ENCODE measurements at regions of chr3 and their contacts with region 1.

Region 1: GRCh38 chr3:178325330-178325729 is 210.9 kb upstream of the KCNMB2 start:
- DNase-seq: no peak
- ATAC-seq: peak in 1 of 8 donors; percentile 25
- H3K4me3 ChIP-seq: no peak overlapping the region
- H3K27ac ChIP-seq: peak overlapping the region in 4 of 10 donors; percentile 17 to 44 (median 41)
- H3K4me1 ChIP-seq: peaks cover 6 to 41% (median 21%) of the 10 kb centered on the region in 9 donors
- H3K27me3 ChIP-seq: no peaks in the 10 kb centered on the region
- CTCF ChIP-seq: peak in 8 of 9 donors; percentile 8 to 68 (median 54)

Region 2: GRCh38 chr3:177041021-177041729 is 1284.2 kb before region 1 on chr3:
- intact Hi-C with region 1: loop called in 5 of 10 experiments (anchors 5 to 10 kb)
- DNase-seq: peak in 1 of 2 donors; percentile 30
- ATAC-seq: peak; percentile 78 to 94 (median 88)
- H3K4me3 ChIP-seq: no peak overlapping the region
- H3K27ac ChIP-seq: peak overlapping the region in 8 of 10 donors; percentile 26 to 72 (median 52)
- H3K4me1 ChIP-seq: peaks cover 5 to 46% (median 29%) of the 10 kb centered on the region in 9 donors
- H3K27me3 ChIP-seq: no peaks in the 10 kb centered on the region
- CTCF ChIP-seq: no peak

Region 3: DNA sequence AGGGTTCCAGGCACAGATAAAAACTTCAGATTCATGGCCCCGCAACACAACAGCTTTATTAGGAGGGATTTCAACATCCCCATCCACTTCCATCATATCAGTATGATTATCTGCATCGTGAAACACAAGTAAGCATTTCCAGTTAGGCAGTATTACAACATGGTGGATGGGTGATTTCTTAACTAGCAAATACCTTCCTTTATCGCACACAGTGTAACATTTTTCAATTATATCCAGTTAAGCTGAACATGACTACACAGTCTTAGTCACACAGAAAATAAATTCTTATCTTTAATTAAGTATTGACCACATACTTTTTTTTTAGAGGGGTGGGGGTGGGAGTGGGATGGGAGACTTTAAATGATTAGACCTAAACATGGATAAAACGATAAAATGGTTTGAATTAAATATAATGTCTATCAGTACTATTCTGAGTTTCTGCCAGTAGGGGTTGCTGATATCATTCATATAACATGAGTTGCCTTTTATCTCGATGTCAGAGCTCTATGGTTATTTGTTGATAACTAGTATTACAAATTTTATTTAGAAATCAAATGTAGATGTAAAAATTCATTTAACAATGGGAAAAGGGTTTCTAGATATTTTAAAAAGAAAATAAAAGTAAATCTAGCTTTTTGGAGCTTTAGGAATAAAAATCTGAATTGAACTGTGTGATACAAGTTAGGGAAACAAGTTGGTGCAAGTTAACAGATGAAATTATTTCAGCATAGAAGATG is 1274.7 kb before region 1 on chr3:
- intact Hi-C with region 1: loop called in 7 of 10 experiments (anchors 5 to 10 kb)
- DNase-seq: no peak
- ATAC-seq: peak in 7 of 8 donors; percentile 48 to 87 (median 65)
- H3K4me3 ChIP-seq: no peak overlapping the region
- H3K27ac ChIP-seq: no peak overlapping the region
- H3K4me1 ChIP-seq: peaks cover 0 to 23% (median 15%) of the 10 kb centered on the region in 9 donors
- H3K27me3 ChIP-seq: no peaks in the 10 kb centered on the region
- CTCF ChIP-seq: peak in 8 of 9 donors; percentile 29 to 76 (median 62)

Region 4: GRCh38 chr3:177713928-177714900 is 611.1 kb before region 1 on chr3:
- intact Hi-C with region 1: loop called in 1 of 10 experiments (anchors 10 kb)
- DNase-seq: no peak
- ATAC-seq: peak in 5 of 8 donors; percentile 25 to 61 (median 46)
- H3K4me3 ChIP-seq: no peak overlapping the region
- H3K27ac ChIP-seq: peak overlapping the region in 2 of 10 donors; percentile 8 to 36
- H3K4me1 ChIP-seq: peaks cover 0 to 20% (median 7%) of the 10 kb centered on the region in 9 donors
- H3K27me3 ChIP-seq: no peaks in the 10 kb centered on the region
- CTCF ChIP-seq: no peak

Region 5: DNA sequence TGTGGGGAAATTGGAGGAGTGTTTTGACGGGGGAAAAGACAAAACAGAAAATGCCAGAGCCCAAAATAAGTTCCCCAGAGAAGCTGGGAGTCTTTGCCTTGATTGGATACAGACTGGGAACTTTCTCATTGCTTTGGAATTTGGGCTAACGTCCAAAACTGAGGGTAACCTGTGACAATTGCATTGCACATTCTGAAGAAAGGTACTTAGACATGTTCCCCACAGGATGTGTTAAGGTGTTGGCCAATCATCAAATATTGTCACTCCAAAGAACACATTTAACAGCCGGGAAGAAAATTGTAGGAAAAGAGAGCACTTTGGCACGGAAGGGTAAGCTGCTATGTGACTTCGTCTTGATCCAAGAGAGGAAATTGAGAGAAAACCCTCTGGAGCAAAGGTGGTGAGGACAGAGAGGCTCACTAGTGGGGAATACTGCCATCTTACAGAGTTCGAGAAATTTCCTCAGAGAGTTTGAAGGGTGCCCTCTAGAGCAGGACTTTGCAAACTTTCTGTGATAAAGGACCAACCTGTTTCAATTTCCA is 508.6 kb before region 1 on chr3:
- intact Hi-C with region 1: loop called in 1 of 10 experiments (anchors 10 kb)
- DNase-seq: peak in 1 of 2 donors; percentile 45
- ATAC-seq: peak; percentile 53 to 74 (median 67)
- H3K4me3 ChIP-seq: no peak overlapping the region
- H3K27ac ChIP-seq: peak overlapping the region in 8 of 10 donors; percentile 20 to 74 (median 55)
- H3K4me1 ChIP-seq: peaks cover 2 to 69% (median 33%) of the 10 kb centered on the region in 9 donors
- H3K27me3 ChIP-seq: no peaks in the 10 kb centered on the region
- CTCF ChIP-seq: peak in 6 of 9 donors; percentile 9 to 48 (median 32)

Region 6: DNA sequence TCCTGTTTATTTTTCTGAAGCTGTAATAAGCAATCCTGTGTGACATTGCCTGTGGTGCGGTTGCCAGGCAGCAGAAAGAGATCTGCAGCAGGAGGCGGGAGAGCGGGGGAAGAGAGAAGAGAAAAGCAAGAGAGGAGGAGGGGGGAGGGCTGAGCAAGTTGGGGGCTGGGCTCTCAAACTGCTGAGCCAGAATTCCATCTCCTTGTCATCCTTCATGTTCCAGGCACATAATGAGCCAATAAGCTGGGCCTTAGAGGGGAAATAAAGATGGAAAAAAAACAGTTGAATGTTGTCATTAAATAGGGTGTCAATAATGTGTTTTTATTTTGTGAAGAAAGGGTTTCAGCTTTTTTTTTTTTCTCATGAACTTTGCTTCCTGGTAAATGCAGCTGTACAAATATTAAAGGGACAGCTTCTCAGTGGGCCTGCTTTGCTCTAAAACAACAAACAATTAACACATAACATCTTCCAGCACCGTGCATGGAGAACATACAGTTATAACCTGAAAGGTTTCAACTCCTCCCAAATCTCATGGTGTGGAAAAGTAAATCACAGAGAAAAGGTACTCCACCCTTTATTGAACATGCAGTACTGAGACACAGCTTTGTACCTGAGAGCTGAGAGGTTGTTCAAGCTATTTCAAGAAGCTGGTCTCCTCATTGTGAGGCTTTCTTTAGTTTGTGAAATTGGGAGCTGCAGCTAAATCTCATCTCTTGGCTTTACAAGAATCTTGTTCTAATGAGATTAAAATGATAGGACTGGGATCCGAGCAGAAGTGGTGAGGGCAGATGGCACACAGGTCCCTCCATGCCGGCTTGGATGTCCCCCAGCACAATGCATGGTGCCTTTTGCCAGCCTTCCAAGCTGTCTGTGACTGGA is 240.2 kb before region 1 on chr3:
- intact Hi-C with region 1: loop called in 2 of 10 experiments (anchors 2 to 10 kb)
- DNase-seq: peak; percentile 77 to 89
- ATAC-seq: peak; percentile 94 to 98 (median 96)
- H3K4me3 ChIP-seq: no peak overlapping the region
- H3K27ac ChIP-seq: peak overlapping the region; percentile 43 to 82 (median 69)
- H3K4me1 ChIP-seq: peaks cover 8 to 62% (median 32%) of the 10 kb centered on the region in 9 donors
- H3K27me3 ChIP-seq: no peaks in the 10 kb centered on the region
- CTCF ChIP-seq: no peak

Region 7: DNA sequence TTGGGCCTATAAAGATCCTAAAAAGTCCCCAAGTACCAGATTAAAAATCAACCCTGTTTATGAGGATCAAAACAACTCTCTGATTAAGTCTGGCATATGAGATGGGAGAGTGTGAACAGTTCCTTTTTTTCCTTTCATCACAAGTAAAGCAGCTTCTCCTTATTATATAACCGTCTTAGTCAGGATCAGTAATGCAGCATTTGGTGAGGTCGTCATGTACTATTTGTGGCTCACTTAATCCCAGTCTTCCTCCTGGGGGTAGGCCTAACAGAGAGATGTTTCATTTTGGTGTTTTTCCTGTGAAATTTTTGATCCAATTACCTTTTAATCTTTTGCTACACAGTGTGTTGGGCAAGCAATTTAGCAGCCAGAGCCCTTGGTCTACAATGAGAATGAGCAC is 122.2 kb before region 1 on chr3:
- intact Hi-C with region 1: no loop called
- DNase-seq: no peak
- ATAC-seq: peak in 7 of 8 donors; percentile 71 to 89 (median 81)
- H3K4me3 ChIP-seq: no peak overlapping the region
- H3K27ac ChIP-seq: peak overlapping the region in 5 of 10 donors; percentile 6 to 45 (median 34)
- H3K4me1 ChIP-seq: peaks cover 0 to 30% (median 19%) of the 10 kb centered on the region in 9 donors
- H3K27me3 ChIP-seq: no peaks in the 10 kb centered on the region
- CTCF ChIP-seq: no peak